CD8-positive, alpha-beta T cell (primary cell): ENCODE measurements at regions of chr5 and their contacts with region 1.

Region 1: DNA sequence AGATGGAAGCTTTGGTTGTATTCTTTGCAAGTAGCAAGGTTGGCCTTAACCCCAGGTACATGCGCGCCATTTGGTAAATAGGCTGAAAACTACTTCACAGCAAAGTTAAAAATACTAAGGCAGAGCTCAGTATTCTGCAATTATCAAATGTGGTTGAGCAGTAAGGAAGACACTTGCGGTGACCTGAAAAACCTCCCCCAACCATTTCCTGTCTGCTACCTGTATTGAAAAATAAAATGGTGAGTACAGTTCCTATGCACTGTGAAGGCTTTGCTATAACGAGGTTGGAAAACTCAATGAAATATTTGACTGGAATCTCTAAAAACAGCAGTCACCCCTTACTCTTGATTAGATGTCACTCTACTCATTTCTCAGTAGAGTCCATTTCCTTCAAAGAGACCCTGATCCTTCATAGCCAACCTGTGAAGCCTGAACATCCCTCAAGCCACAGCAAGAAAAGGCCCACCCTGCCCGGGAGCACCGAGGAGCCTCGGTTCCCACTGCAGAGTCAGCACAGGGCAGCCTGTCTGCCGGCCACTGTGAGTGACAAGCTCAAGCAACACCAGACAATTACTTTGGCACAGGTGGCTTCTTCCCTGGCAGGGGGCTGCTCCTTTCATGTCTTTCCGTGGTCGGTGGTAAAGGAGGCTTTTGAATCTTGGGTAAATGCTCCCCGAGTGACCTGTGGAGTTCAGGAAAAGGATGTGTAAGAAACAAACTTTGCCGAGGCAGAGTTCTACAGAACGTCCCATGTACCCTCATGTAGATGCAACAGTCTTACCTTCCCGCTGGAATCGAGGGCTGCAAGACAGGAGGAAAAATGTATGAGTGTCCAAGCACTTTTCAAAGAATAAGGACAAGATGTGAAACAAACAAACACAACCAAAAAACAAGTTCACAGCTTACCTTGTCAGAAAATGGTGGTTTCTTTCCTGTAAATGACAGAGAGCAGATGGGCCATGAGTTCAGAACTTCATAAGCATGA is 29.6 kb downstream of the C5orf58 start:
- DNase-seq: peak in 6 of 9 experiments; percentile 43 to 87 (median 67)
- ATAC-seq: peak; percentile 77
- H3K4me3 ChIP-seq: peak overlapping the region in 1 of 2 experiments; percentile 11
- H3K4me3 Mint-ChIP-seq: peak overlapping the region; percentile 74
- H3K27ac ChIP-seq: peak overlapping the region; percentile 45 to 62
- H3K27ac Mint-ChIP-seq: peak overlapping the region; percentile 98
- H3K4me1 ChIP-seq: peaks cover 81% of the 10 kb centered on the region
- H3K4me1 Mint-ChIP-seq: peaks cover 96% of the 10 kb centered on the region
- H3K27me3 ChIP-seq: no peaks in the 10 kb centered on the region
- H3K27me3 Mint-ChIP-seq: no peaks in the 10 kb centered on the region
- CTCF ChIP-seq: no peak

Region 2: DNA sequence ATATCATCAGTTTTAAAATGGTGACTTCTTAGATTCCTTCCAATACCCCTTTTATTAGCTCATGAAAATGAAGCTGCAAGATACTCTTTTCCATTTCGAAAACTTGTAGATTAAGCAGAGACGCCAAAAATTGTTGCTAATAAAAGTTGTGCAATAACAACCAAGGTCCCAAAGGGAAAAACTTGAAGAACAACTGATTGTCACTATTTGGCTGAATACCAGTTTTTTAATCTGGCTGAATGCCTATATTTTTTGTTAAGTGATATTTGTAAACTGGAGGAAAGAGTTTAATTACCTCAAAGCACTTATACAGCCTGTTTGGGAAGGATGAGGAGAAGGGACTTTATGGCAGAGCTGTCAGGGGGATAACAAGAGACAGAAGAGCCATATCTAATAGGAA is 15.0 kb before region 1 on chr5:
- CTCF ChIA-PET with region 1: interaction called, 14 read pairs
- POLR2A ChIA-PET with region 1: interaction called, 4 read pairs
- intact Hi-C with region 1: loop called in 1 of 2 experiments (anchors 1 kb)
- DNase-seq: no peak
- ATAC-seq: no peak
- H3K4me3 ChIP-seq: no peak overlapping the region
- H3K4me3 Mint-ChIP-seq: no peak overlapping the region
- H3K27ac ChIP-seq: no peak overlapping the region
- H3K27ac Mint-ChIP-seq: peak overlapping the region; percentile 41
- H3K4me1 ChIP-seq: peaks cover 8% of the 10 kb centered on the region
- H3K4me1 Mint-ChIP-seq: peaks cover 32% of the 10 kb centered on the region
- H3K27me3 ChIP-seq: no peaks in the 10 kb centered on the region
- H3K27me3 Mint-ChIP-seq: no peaks in the 10 kb centered on the region
- CTCF ChIP-seq: no peak

Region 3: GRCh38 chr5:170293273-170293672 is 30.9 kb after region 1 on chr5:
- CTCF ChIA-PET with region 1: interaction called, 385 read pairs
- POLR2A ChIA-PET with region 1: interaction called, 494 read pairs
- intact Hi-C with region 1: no loop called
- DNase-seq: peak in 6 of 9 experiments; percentile 53 to 86 (median 72)
- ATAC-seq: peak; percentile 29
- H3K4me3 ChIP-seq: peak overlapping the region; percentile 87 to 94
- H3K4me3 Mint-ChIP-seq: peak overlapping the region; percentile 99
- H3K27ac ChIP-seq: peak overlapping the region in 1 of 2 experiments; percentile 86
- H3K27ac Mint-ChIP-seq: peak overlapping the region; percentile 97
- H3K4me1 ChIP-seq: peaks cover 73% of the 10 kb centered on the region
- H3K4me1 Mint-ChIP-seq: peaks cover 82% of the 10 kb centered on the region
- H3K27me3 ChIP-seq: no peaks in the 10 kb centered on the region
- H3K27me3 Mint-ChIP-seq: no peaks in the 10 kb centered on the region
- CTCF ChIP-seq: no peak